Natural killer cell (primary cell): ENCODE measurements at regions of chr17 and their contacts with region 1.

Region 1: GRCh38 chr17:31508288-31509094 is 117.0 kb downstream of the RAB11FIP4 start:
- DNase-seq: peak; percentile 64 to 92
- ATAC-seq: peak; percentile 84 to 97 (median 90)
- H3K4me3 ChIP-seq: peak overlapping the region; percentile 27
- H3K4me3 Mint-ChIP-seq: peak overlapping the region; percentile 95
- H3K27ac ChIP-seq: peak overlapping the region; percentile 96
- H3K27ac Mint-ChIP-seq: peak overlapping the region; percentile 96 to 97
- H3K4me1 ChIP-seq: peaks cover 69% of the 10 kb centered on the region
- H3K4me1 Mint-ChIP-seq: peaks cover 60 to 68% of the 10 kb centered on the region in 2 donors
- H3K27me3 ChIP-seq: no peaks in the 10 kb centered on the region
- H3K27me3 Mint-ChIP-seq: no peaks in the 10 kb centered on the region
- CTCF ChIP-seq: peak; percentile 48

Region 2: GRCh38 chr17:31444026-31444425 is 64.5 kb before region 1 on chr17:
- intact Hi-C with region 1: no loop called
- DNase-seq: no peak
- ATAC-seq: no peak
- H3K4me3 ChIP-seq: no peak overlapping the region
- H3K4me3 Mint-ChIP-seq: no peak overlapping the region
- H3K27ac ChIP-seq: no peak overlapping the region
- H3K27ac Mint-ChIP-seq: no peak overlapping the region
- H3K4me1 ChIP-seq: peaks cover 3% of the 10 kb centered on the region
- H3K4me1 Mint-ChIP-seq: no peaks in the 10 kb centered on the region
- H3K27me3 ChIP-seq: no peaks in the 10 kb centered on the region
- H3K27me3 Mint-ChIP-seq: peaks cover 0 to under 1% of the 10 kb centered on the region in 2 donors
- CTCF ChIP-seq: no peak

Region 3: GRCh38 chr17:31494259-31495021 is 14.1 kb before region 1 on chr17:
- intact Hi-C with region 1: loop called (anchors 1 kb)
- DNase-seq: peak; percentile 58 to 87
- ATAC-seq: peak; percentile 83 to 89 (median 87)
- H3K4me3 ChIP-seq: no peak overlapping the region
- H3K4me3 Mint-ChIP-seq: peak overlapping the region; percentile 71
- H3K27ac ChIP-seq: peak overlapping the region; percentile 89
- H3K27ac Mint-ChIP-seq: peak overlapping the region; percentile 92 to 97
- H3K4me1 ChIP-seq: peaks cover 94% of the 10 kb centered on the region
- H3K4me1 Mint-ChIP-seq: peaks cover 82 to 93% of the 10 kb centered on the region in 2 donors
- H3K27me3 ChIP-seq: no peaks in the 10 kb centered on the region
- H3K27me3 Mint-ChIP-seq: no peaks in the 10 kb centered on the region
- CTCF ChIP-seq: no peak